ENCODE measurements at regions of chr17 and their contacts with region 1.

Region 1: DNA sequence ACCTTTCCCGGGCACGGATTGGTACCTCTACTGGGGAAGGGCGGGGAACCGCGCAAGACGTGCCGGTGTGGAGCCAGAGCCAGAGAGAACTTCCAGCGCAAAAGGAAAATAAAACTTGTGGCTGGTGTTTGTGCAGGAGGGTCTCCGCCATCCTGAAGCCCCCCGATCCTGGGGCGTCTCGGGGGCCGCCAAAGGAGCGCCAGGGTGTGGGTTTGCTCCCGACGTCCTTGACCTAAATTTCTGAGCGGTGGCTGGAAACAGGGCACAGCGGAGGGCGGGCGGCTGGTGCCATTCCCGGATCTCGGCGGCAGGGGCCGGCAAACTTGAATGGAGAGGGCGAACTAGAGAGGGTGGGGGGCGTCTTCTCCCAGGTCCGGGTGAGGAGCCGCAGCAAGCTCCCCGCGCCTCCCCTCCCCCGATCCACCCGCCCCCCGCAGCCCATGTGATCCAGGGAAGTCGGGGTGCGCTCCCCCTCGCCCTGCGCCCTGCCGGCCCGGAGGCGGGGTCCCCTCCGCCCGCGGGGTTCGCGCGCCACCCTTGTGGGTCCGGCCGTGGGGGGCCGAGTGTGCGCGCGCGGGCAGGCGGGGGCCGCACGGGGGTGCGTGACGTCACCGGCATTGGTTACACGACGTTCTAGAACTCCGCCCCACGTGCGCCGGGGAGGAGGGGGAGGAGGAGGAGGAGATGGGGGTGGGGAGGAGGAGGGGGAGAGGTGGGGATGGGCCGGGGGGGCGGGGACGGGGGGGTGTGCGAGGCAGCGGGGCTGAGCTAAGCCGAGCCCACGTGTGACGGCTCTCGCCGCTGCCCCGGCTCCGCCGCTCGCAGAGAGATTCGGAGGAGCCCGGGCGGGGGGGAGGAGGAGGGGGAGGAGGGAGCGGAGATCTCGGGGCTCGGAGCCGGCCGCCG is at the start of gene MSI2:
- DNase-seq: peak; percentile 88 to 94 (median 91)
- ATAC-seq: peak; percentile 89
- H3K4me3 ChIP-seq: peak within 1 kb of the TSS; percentile 78
- H3K27ac ChIP-seq: peak within 1 kb of the TSS; percentile 79
- H3K4me1 ChIP-seq: peaks cover 10 to 13% of the 10 kb centered on the region in 2 experiments; a peak in 4 of 5 replicates
- H3K27me3 ChIP-seq: no peaks in the 10 kb centered on the region
- CTCF ChIP-seq: no peak
- EP300 ChIP-seq: no peak
- POLR2A ChIP-seq: no peak
- RAD21 ChIP-seq: no peak
- polyA plus RNA-seq, gene MSI2: 4.6 to 5.3 TPM

Region 2: GRCh38 chr17:57084802-57085447 is 171.1 kb before region 1 on chr17 and contains the start of gene AKAP1:
- CTCF ChIA-PET with region 1: no interaction called
- POLR2A ChIA-PET with region 1: no interaction called
- in situ Hi-C with region 1: no loop called
- intact Hi-C with region 1: no loop called
- DNase-seq: peak; percentile 97 to 99 (median 98)
- ATAC-seq: peak; percentile 94
- H3K4me3 ChIP-seq: peak within 1 kb of the TSS; percentile 61
- H3K27ac ChIP-seq: peak within 1 kb of the TSS; percentile 83
- H3K4me1 ChIP-seq: peaks cover 24 to 36% of the 10 kb centered on the region in 2 experiments; a peak in 4 of 5 replicates
- H3K27me3 ChIP-seq: no peaks in the 10 kb centered on the region
- CTCF ChIP-seq: peak in 2 of 3 experiments; percentile 56 to 60; a peak in 4 of 6 replicates
- EP300 ChIP-seq: no peak
- POLR2A ChIP-seq: peak; percentile 95
- RAD21 ChIP-seq: peak; percentile 27 to 32
- polyA plus RNA-seq, gene AKAP1: 12.9 to 13.2 TPM

Region 3: DNA sequence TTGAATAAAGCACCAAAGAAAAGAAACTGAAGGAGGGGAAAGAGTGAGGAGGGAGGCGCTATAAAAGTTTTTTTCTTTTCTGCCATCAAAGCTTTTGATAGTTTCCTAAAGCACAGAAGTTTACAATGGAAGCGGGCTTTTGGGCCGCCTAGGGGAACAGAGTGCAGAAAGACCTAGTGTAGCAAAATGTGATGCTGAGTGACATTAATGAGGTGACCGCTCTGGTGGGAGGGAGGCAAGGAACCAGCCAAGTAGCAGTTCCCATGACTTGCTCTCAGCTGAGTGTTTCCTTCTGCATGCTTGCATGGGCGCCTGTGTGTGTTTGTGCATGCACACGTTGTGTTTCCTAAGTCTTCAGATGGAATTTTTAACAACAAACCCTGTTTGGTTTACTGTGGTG is 15.8 kb after region 1 on chr17:
- CTCF ChIA-PET with region 1: no interaction called
- POLR2A ChIA-PET with region 1: interaction called, 35 read pairs
- in situ Hi-C with region 1: no loop called
- intact Hi-C with region 1: no loop called
- DNase-seq: no peak
- ATAC-seq: no peak
- H3K4me3 ChIP-seq: no peak overlapping the region
- H3K27ac ChIP-seq: no peak overlapping the region
- H3K4me1 ChIP-seq: no peaks in the 10 kb centered on the region
- H3K27me3 ChIP-seq: no peaks in the 10 kb centered on the region
- CTCF ChIP-seq: no peak
- EP300 ChIP-seq: no peak
- POLR2A ChIP-seq: no peak
- RAD21 ChIP-seq: no peak

Region 4: GRCh38 chr17:57577751-57578607 is 321.9 kb after region 1 on chr17:
- CTCF ChIA-PET with region 1: no interaction called
- POLR2A ChIA-PET with region 1: no interaction called
- in situ Hi-C with region 1: no loop called
- intact Hi-C with region 1: no loop called
- DNase-seq: no peak
- ATAC-seq: no peak
- H3K4me3 ChIP-seq: no peak overlapping the region
- H3K27ac ChIP-seq: no peak overlapping the region
- H3K4me1 ChIP-seq: no peaks in the 10 kb centered on the region
- H3K27me3 ChIP-seq: no peaks in the 10 kb centered on the region
- CTCF ChIP-seq: no peak
- EP300 ChIP-seq: no peak
- POLR2A ChIP-seq: no peak
- RAD21 ChIP-seq: no peak